Activated CD4-positive, alpha-beta memory T cell treated with anti-CD3 and anti-CD28 coated beads for 36 hours (primary cell): ENCODE measurements at regions of chr22 and their contacts with region 1.

Region 1: GRCh38 chr22:35399678-35400334 is at the start of gene MCM5:
- DNase-seq: peak; percentile 99
- H3K4me3 Mint-ChIP-seq: peak within 1 kb of the TSS; percentile 96
- H3K27ac Mint-ChIP-seq: peak within 1 kb of the TSS; percentile 97
- H3K4me1 Mint-ChIP-seq: peaks cover 29% of the 10 kb centered on the region
- H3K27me3 Mint-ChIP-seq: no peaks in the 10 kb centered on the region
- total RNA-seq, gene MCM5: 265 to 266 TPM

Region 2: GRCh38 chr22:35376728-35377472 is 22.9 kb before region 1 on chr22:
- CTCF ChIA-PET with region 1: no interaction called
- POLR2A ChIA-PET with region 1: no interaction called
- intact Hi-C with region 1: loop called (anchors 1 kb)
- DNase-seq: peak; percentile 71
- H3K4me3 Mint-ChIP-seq: no peak overlapping the region
- H3K27ac Mint-ChIP-seq: peak overlapping the region; percentile 77
- H3K4me1 Mint-ChIP-seq: peaks cover 24% of the 10 kb centered on the region
- H3K27me3 Mint-ChIP-seq: peaks cover 3% of the 10 kb centered on the region

Region 3: DNA sequence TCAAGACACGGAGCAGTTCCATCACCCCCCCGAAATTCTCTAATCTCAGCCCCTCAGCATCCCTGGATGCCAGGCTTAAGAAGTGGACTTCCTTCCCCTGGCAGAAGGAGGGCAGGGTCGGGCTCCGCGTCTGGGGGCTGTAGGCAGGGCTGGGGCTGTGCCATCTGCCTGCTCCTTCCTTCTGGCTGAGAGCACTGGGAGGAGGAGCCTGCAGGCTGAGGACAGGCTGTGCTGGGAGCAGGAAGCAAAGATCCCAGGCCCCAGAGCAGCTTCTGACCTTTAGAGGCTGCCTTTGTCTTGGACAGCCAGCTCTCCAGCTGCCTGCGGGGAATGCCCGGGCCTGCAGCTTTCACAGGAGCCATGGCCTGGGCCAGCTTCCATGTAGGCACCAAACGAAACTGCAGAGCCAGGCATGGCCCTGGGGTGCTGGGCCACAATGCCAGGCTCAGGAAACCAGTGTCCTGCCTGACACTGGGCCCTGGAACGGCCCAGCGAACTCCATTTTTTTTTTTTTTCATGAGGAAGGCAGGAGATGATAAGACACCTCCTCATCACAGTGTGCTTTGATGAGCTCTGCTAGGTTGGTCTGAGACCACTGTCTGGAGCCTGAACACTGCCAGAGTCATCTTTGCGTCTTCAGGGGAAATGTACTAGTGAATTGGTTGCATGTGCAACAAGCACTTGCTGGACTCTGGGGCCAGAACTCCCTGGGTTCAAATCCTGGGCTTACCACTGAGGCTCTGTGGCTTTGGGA is 68.1 kb after region 1 on chr22:
- CTCF ChIA-PET with region 1: no interaction called
- POLR2A ChIA-PET with region 1: no interaction called
- intact Hi-C with region 1: no loop called
- DNase-seq: no peak
- H3K4me3 Mint-ChIP-seq: no peak overlapping the region
- H3K27ac Mint-ChIP-seq: no peak overlapping the region
- H3K4me1 Mint-ChIP-seq: no peaks in the 10 kb centered on the region
- H3K27me3 Mint-ChIP-seq: no peaks in the 10 kb centered on the region

Region 4: GRCh38 chr22:36017651-36018091 is 617.9 kb after region 1 on chr22:
- CTCF ChIA-PET with region 1: no interaction called
- POLR2A ChIA-PET with region 1: no interaction called
- intact Hi-C with region 1: no loop called
- DNase-seq: no peak
- H3K4me3 Mint-ChIP-seq: no peak overlapping the region
- H3K27ac Mint-ChIP-seq: no peak overlapping the region
- H3K4me1 Mint-ChIP-seq: peaks cover 12% of the 10 kb centered on the region
- H3K27me3 Mint-ChIP-seq: peaks cover 6% of the 10 kb centered on the region